Thyroid gland (tissue), 4 donors: ENCODE measurements at regions of chr1 and their contacts with region 1.

Region 1: DNA sequence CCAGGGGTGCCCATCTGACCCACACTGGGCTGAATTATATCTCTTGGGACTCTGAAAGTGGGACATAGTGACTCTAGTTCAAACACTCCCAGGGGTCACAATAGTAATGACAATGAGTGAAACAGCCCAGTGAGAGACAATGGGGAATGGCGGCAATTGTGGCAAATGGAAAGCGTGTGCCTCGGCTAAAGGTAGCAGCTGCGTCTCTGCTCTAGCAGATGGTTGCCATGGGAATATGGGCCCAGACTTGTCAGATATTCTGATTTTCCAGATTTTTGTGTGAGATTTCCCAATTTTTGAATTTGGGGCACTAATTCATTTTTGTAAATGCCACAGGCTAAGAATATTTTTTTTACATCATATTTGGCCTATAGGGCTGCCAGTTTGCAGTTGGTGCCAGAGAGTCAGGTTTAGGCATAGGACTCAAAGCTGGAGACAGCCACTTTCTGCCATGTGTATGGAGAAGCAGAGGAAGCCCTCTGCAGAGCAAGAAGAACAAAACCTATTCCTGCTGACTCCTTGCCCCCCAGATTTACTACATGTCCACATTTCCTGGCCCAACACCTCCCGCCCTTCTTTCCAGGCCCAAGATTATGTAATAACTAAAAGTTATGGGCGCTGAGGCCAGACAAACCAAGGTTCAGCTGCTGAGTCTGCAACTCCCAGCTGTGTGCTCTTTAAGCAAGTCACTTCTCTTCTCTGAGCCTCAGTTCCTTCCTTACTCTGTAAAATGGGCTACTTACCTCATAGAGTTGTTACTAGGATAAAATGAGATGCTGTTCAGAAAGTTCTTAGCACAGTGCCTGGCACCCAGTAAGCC is 21.6 kb upstream of the PTP4A2 start:
- DNase-seq: no peak
- H3K4me3 ChIP-seq: no peak overlapping the region
- H3K27ac ChIP-seq: no peak overlapping the region
- H3K4me1 ChIP-seq: peaks cover 19 to 50% of the 10 kb centered on the region in 2 donors
- H3K27me3 ChIP-seq: no peaks in the 10 kb centered on the region
- CTCF ChIP-seq: no peak
- POLR2A ChIP-seq: no peak

Region 2: GRCh38 chr1:31564134-31564989 is 395.4 kb before region 1 on chr1:
- intact Hi-C with region 1: loop called (anchors 10 kb)
- DNase-seq: peak; percentile 63 to 66
- H3K4me3 ChIP-seq: no peak overlapping the region
- H3K27ac ChIP-seq: peak overlapping the region; percentile 10 to 46 (median 14)
- H3K4me1 ChIP-seq: peaks cover 16 to 38% of the 10 kb centered on the region in 2 donors
- H3K27me3 ChIP-seq: no peaks in the 10 kb centered on the region
- CTCF ChIP-seq: peak; percentile 70 to 96 (median 92)
- POLR2A ChIP-seq: no peak

Region 3: DNA sequence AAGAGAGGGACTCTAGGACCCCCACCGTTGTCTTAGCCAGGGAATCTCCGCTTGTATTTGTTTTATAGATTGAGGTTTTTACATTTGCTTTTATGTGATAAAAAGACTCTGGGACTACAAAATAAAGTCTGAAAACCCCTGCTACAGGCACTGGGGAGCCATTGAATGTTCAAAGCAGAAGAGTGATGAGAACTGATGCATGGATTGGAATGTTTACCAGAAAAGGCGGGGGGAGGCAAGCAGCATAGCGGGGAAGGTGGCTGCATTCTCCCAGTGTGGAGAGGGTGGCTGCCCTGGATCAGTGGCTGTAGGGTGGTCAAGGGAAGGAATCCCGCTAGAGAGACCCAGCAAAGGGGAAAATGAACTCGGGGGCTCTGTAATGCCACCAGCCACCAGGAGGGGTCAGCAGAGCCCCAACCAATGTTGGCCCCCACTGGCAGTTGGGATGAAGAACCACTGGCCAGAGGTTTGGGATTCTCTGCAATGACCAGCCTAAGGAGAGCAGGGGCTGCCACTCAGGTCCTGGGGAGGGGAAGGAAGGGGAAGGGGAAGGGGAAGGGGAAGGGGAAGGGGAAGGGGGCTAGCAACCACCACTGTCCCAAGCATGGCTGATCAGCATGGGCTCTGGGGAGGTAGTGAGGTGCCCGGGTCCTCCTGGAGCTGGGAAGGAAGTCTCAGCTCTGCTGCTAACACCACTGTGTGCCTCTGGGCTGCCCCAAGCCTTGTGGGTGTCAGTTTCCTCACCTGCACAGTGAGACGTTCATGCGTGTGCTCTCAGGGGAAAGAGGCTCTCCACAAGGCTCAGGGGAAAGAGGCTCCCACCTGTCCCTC is 295.9 kb before region 1 on chr1:
- intact Hi-C with region 1: loop called (anchors 10 kb)
- DNase-seq: peak; percentile 48 to 53
- H3K4me3 ChIP-seq: no peak overlapping the region
- H3K27ac ChIP-seq: peak overlapping the region in 2 of 3 donors; percentile 90 to 94
- H3K4me1 ChIP-seq: peaks cover 32 to 61% of the 10 kb centered on the region in 2 donors
- H3K27me3 ChIP-seq: no peaks in the 10 kb centered on the region
- CTCF ChIP-seq: peak; percentile 76 to 93 (median 92)
- POLR2A ChIP-seq: no peak

Region 4: GRCh38 chr1:31762726-31763670 is 196.7 kb before region 1 on chr1:
- intact Hi-C with region 1: loop called (anchors 10 kb)
- DNase-seq: peak; percentile 83 to 85
- H3K4me3 ChIP-seq: peak overlapping the region in 1 of 3 donors; percentile 41
- H3K27ac ChIP-seq: no peak overlapping the region
- H3K4me1 ChIP-seq: peaks cover 16 to 59% of the 10 kb centered on the region in 2 donors
- H3K27me3 ChIP-seq: no peaks in the 10 kb centered on the region
- CTCF ChIP-seq: peak in 4 of 6 experiments; percentile 60 to 84 (median 79)
- POLR2A ChIP-seq: no peak

Region 5: DNA sequence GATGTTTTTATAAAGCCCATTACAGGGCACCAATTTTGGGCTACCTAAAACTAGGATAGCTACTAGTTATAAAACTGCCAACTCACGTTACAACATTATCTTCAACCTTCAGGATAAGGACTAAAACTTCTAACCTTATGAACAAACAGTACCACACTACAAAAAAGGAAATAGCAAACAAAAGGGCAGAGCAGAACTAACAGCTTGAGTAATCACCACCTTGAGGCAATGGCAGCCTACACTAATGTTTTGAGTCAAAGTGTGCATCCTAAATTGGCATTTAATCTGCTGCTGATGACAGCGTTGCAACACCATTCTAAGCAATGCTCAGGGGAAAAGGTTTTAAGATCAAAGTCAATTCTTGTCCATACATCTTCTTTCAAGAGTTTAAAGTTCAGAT is 48.8 kb before region 1 on chr1:
- intact Hi-C with region 1: no loop called
- DNase-seq: no peak
- H3K4me3 ChIP-seq: no peak overlapping the region
- H3K27ac ChIP-seq: no peak overlapping the region
- H3K4me1 ChIP-seq: peaks cover 0 to 30% of the 10 kb centered on the region in 2 donors
- H3K27me3 ChIP-seq: no peaks in the 10 kb centered on the region
- CTCF ChIP-seq: no peak
- POLR2A ChIP-seq: no peak

Region 6: DNA sequence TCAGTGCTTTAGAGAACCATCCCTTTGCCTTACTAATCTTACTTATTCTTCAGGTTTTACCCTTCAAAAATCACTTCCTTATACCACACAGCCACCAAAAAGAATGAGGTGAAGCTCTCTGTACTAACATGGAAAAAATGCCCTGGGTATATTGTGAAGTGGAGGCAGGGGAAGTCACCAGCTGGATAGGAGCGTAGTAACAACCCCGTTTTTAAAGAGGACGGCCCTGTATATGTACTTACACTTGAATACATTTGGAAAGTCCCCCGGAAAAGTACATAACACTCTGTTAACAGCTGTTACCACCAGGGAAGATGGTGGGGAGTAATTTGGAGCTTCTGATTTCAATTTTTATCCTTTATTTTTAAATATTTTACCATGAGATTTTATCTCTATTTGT is 25.7 kb after region 1 on chr1:
- intact Hi-C with region 1: no loop called
- DNase-seq: no peak
- H3K4me3 ChIP-seq: no peak overlapping the region
- H3K27ac ChIP-seq: peak overlapping the region; percentile 51 to 70 (median 51)
- H3K4me1 ChIP-seq: peaks cover 18 to 20% of the 10 kb centered on the region in 2 donors
- H3K27me3 ChIP-seq: no peaks in the 10 kb centered on the region
- CTCF ChIP-seq: no peak
- POLR2A ChIP-seq: no peak

Region 7: DNA sequence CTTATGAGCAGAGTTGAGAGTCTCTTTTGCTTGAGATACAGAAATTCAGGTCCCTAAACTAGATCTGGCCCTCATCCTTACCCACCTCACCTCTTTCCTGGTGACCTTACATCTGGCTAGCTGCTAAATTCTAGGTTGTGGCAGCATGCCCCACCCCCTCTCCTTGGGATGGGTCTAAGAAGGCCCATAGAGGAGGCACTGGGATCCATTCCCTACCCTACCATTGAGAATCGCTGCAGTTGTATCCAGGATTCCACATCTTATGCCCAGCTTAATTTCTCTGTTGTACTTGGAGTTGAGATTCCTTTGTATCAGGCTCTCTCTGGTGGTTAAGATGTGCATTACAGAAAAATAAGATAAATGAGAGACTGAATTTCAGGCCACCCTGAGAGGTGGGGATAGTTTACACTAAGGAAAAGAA is 103.5 kb after region 1 on chr1:
- intact Hi-C with region 1: loop called (anchors 10 kb)
- DNase-seq: peak in 1 of 2 donors; percentile 20
- H3K4me3 ChIP-seq: no peak overlapping the region
- H3K27ac ChIP-seq: peak overlapping the region; percentile 34 to 77 (median 53)
- H3K4me1 ChIP-seq: peaks cover 19 to 37% of the 10 kb centered on the region in 2 donors
- H3K27me3 ChIP-seq: no peaks in the 10 kb centered on the region
- CTCF ChIP-seq: peak; percentile 26 to 87 (median 63)
- POLR2A ChIP-seq: no peak